Esophagus muscularis mucosa (tissue), 4 donors: ENCODE measurements at regions of chr2 and their contacts with region 1.

Region 1: GRCh38 chr2:62410015-62410453 is 96.0 kb downstream of the TMEM17 start:
- DNase-seq: no peak
- H3K4me3 ChIP-seq: no peak overlapping the region
- H3K27ac ChIP-seq: peak overlapping the region in 2 of 4 donors; percentile 68 to 81
- H3K4me1 ChIP-seq: peaks cover 18 to 35% (median 28%) of the 10 kb centered on the region in 4 donors
- H3K27me3 ChIP-seq: no peaks in the 10 kb centered on the region
- CTCF ChIP-seq: no peak
- EP300 ChIP-seq: no peak
- POLR2A ChIP-seq: no peak

Region 2: GRCh38 chr2:61922714-61923113 is 487.3 kb before region 1 on chr2:
- intact Hi-C with region 1: loop called (anchors 2 kb)
- DNase-seq: no peak
- H3K4me3 ChIP-seq: no peak overlapping the region
- H3K27ac ChIP-seq: no peak overlapping the region
- H3K4me1 ChIP-seq: peaks cover 8 to 20% (median 13%) of the 10 kb centered on the region in 4 donors
- H3K27me3 ChIP-seq: no peaks in the 10 kb centered on the region
- CTCF ChIP-seq: no peak
- EP300 ChIP-seq: no peak
- POLR2A ChIP-seq: no peak

Region 3: DNA sequence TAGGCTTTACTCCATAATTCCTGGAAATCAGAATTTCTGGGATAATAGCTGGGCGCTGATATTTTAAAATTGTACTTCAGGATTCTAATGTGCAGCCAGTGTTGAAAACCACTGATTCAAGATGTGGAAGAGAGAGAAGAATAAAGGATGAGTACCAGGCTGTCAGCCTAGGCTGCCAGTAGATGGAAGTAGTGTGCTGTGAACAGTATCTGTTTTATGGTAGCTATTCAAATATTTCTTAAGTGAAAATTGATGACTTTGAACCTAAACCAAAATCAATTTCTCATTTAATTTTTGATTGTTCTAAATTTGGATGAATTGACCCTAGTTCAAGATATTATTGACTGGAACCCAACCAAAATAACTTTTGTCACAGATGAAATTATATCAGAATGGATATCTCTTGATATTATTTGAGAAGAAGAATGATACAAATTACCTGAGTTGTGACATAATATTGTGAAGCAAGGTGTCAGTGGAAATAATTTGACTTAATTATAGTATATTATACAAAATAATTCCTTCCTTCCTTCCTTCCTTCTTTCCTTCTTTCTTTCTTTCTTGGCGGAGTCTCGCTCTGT is 416.5 kb before region 1 on chr2:
- intact Hi-C with region 1: loop called (anchors 5 kb)
- DNase-seq: no peak
- H3K4me3 ChIP-seq: no peak overlapping the region
- H3K27ac ChIP-seq: no peak overlapping the region
- H3K4me1 ChIP-seq: peaks cover 0 to 10% (median 3%) of the 10 kb centered on the region in 4 donors
- H3K27me3 ChIP-seq: no peaks in the 10 kb centered on the region
- CTCF ChIP-seq: peak; percentile 56 to 71 (median 64)
- EP300 ChIP-seq: no peak
- POLR2A ChIP-seq: no peak